CD4-positive, alpha-beta T cell (primary cell): ENCODE measurements at regions of chr15 and their contacts with region 1.

Region 1: GRCh38 chr15:59997070-59997701 is 6.9 kb upstream of the FOXB1 start:
- DNase-seq: peak in 12 of 14 experiments; percentile 25 to 77 (median 49)
- ATAC-seq: peak; percentile 65
- H3K4me3 ChIP-seq: no peak overlapping the region
- H3K4me3 Mint-ChIP-seq: no peak overlapping the region
- H3K27ac ChIP-seq: no peak overlapping the region
- H3K27ac Mint-ChIP-seq: no peak overlapping the region
- H3K4me1 ChIP-seq: peaks cover 52% of the 10 kb centered on the region
- H3K4me1 Mint-ChIP-seq: peaks cover 73% of the 10 kb centered on the region
- H3K27me3 ChIP-seq: peaks cover 95 to 100% of the 10 kb centered on the region in 2 experiments
- H3K27me3 Mint-ChIP-seq: peaks cover 98% of the 10 kb centered on the region
- CTCF ChIP-seq: no peak

Region 2: GRCh38 chr15:59917504-59918157 is 79.6 kb before region 1 on chr15:
- CTCF ChIA-PET with region 1: interaction called, 4 read pairs
- POLR2A ChIA-PET with region 1: no interaction called
- intact Hi-C with region 1: loop called in 1 of 2 experiments (anchors 5 kb)
- DNase-seq: peak; percentile 47 to 79 (median 60)
- ATAC-seq: peak; percentile 80
- H3K4me3 ChIP-seq: no peak overlapping the region
- H3K4me3 Mint-ChIP-seq: no peak overlapping the region
- H3K27ac ChIP-seq: no peak overlapping the region
- H3K27ac Mint-ChIP-seq: no peak overlapping the region
- H3K4me1 ChIP-seq: peaks cover 19% of the 10 kb centered on the region
- H3K4me1 Mint-ChIP-seq: peaks cover 15% of the 10 kb centered on the region
- H3K27me3 ChIP-seq: no peaks in the 10 kb centered on the region
- H3K27me3 Mint-ChIP-seq: peaks cover 30% of the 10 kb centered on the region
- CTCF ChIP-seq: peak; percentile 68

Region 3: DNA sequence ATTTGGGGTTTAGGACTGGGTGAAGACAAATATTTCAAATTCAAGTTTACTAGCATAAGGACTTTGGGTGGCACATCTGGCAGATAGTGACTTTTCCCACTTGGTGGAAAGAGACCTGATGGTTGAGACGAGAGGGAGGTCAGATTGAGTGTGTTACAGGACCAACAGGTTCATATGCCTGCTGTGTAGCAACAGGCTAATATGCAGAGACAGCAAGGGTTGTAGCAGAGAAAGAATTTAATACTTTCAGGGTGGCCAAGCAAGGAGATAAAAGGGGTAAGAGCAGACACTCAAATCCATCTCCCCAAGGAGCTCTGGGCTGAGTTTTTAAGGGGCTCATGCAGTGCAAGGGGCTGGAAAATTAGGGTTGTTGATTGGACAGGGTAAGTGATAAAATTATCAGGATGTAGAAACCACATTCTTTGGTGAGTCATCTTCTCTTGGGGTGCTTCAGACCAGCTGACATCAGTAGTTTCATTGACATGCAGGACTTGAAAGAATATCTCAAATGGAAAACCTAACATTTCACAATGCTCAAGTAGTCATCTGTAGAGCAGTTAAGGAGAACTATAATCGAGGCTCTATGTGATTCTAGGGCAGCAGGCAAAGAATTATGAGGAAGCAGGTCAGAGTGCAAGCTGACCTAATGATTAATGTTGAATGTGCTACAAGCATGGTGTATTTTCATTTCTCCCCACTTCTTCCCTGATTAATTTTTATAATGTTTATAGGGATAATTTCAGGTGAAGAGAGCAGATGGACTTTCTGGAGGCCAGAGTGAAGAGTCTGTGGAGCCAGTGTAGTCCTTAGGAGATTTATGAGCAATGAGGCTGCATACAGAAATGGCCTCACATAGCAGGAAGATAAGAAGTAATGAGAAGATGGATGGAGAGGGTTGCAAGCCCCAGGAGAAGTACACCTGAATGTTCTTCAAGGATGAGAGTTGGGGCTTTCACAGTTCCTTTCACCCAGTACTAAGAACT is 20.6 kb after region 1 on chr15:
- CTCF ChIA-PET with region 1: no interaction called
- POLR2A ChIA-PET with region 1: no interaction called
- intact Hi-C with region 1: no loop called
- DNase-seq: peak in 2 of 14 experiments; percentile 29 to 34
- ATAC-seq: no peak
- H3K4me3 ChIP-seq: no peak overlapping the region
- H3K4me3 Mint-ChIP-seq: no peak overlapping the region
- H3K27ac ChIP-seq: no peak overlapping the region
- H3K27ac Mint-ChIP-seq: no peak overlapping the region
- H3K4me1 ChIP-seq: peaks cover 10% of the 10 kb centered on the region
- H3K4me1 Mint-ChIP-seq: no peaks in the 10 kb centered on the region
- H3K27me3 ChIP-seq: peaks cover 5% of the 10 kb centered on the region in 2 experiments
- H3K27me3 Mint-ChIP-seq: peaks cover 55% of the 10 kb centered on the region
- CTCF ChIP-seq: no peak

Region 4: DNA sequence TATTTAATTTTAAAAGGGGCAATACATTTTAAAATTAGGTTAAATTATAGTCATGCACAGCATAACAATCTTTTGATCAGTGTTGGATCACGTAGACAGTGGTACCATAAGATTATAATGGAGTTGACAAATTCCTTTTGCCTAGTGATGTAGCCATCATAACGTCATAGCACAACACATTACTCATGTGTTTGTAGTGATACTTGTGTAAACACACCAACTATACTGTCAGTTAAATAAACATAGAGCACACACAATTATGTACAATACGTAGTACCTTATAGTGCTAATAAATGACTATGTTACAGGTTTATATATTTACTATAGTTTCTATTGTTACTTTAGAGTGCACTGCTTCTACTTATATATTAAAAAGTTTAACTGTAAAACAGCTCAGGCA is 38.2 kb after region 1 on chr15:
- CTCF ChIA-PET with region 1: no interaction called
- POLR2A ChIA-PET with region 1: interaction called, 3 read pairs
- intact Hi-C with region 1: loop called in 1 of 2 experiments (anchors 1 kb)
- DNase-seq: no peak
- ATAC-seq: no peak
- H3K4me3 ChIP-seq: no peak overlapping the region
- H3K4me3 Mint-ChIP-seq: no peak overlapping the region
- H3K27ac ChIP-seq: no peak overlapping the region
- H3K27ac Mint-ChIP-seq: no peak overlapping the region
- H3K4me1 ChIP-seq: no peaks in the 10 kb centered on the region
- H3K4me1 Mint-ChIP-seq: no peaks in the 10 kb centered on the region
- H3K27me3 ChIP-seq: peaks cover 0 to 2% of the 10 kb centered on the region in 2 experiments
- H3K27me3 Mint-ChIP-seq: peaks cover 7% of the 10 kb centered on the region
- CTCF ChIP-seq: no peak

Region 5: DNA sequence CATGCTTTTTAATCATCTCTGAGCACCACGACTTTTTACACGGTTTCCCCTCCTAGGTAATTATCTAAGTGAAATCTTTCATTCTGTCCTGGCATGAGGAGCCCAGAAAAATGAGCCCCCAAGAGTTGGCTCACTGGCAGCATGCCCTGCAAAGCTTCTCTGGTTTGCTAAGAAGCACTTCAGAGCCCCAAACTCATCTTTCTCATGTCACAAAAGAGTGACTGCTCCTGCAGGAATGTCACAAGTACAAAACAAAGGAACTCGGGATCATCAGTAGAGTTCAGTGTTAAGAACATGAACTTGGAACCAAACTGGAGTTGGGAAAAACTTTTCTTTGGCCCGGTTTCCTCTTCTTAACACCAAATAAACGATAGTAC is 130.8 kb after region 1 on chr15:
- CTCF ChIA-PET with region 1: interaction called, 5 read pairs
- POLR2A ChIA-PET with region 1: interaction called, 4 read pairs
- intact Hi-C with region 1: loop called in 1 of 2 experiments (anchors 5 kb)
- DNase-seq: peak in 1 of 14 experiments; percentile 6
- ATAC-seq: no peak
- H3K4me3 ChIP-seq: peak overlapping the region; percentile 55
- H3K4me3 Mint-ChIP-seq: peak overlapping the region; percentile 78
- H3K27ac ChIP-seq: peak overlapping the region; percentile 64 to 68
- H3K27ac Mint-ChIP-seq: peak overlapping the region; percentile 88
- H3K4me1 ChIP-seq: peaks cover 14% of the 10 kb centered on the region
- H3K4me1 Mint-ChIP-seq: peaks cover 52% of the 10 kb centered on the region
- H3K27me3 ChIP-seq: no peaks in the 10 kb centered on the region
- H3K27me3 Mint-ChIP-seq: no peaks in the 10 kb centered on the region
- CTCF ChIP-seq: no peak

Region 6: DNA sequence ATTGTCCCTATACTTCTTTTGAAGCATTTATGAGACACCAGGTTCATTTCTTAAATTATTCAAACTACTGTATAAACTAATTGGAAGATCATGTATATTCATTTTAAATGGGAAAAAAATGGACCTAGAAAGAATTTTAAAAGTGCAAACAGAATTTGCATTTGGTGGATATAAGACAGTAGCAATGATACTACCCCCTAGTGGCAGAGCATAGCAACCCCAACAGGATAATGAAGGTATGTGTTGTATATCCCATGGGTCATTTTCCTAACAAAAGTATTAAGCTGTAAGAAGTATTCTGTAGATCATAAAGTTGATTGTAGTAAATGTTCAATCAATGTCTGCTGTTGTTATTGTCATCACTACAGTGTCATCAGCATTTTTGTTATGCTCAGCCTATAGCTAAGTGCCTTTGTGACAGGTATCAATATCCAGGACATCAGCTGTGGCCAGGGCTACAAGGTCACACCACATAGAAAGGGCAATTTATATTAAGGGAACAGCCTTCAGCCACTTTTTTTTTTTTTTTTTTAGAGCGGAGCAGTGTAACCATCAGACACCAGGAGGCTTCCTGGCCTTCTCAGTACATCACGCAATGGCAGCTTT is 182.7 kb after region 1 on chr15:
- CTCF ChIA-PET with region 1: no interaction called
- POLR2A ChIA-PET with region 1: no interaction called
- intact Hi-C with region 1: loop called in 1 of 2 experiments (anchors 5 kb)
- DNase-seq: peak in 11 of 14 experiments; percentile 2 to 72 (median 14)
- ATAC-seq: peak; percentile 64
- H3K4me3 ChIP-seq: no peak overlapping the region
- H3K4me3 Mint-ChIP-seq: no peak overlapping the region
- H3K27ac ChIP-seq: no peak overlapping the region
- H3K27ac Mint-ChIP-seq: no peak overlapping the region
- H3K4me1 ChIP-seq: no peaks in the 10 kb centered on the region
- H3K4me1 Mint-ChIP-seq: no peaks in the 10 kb centered on the region
- H3K27me3 ChIP-seq: no peaks in the 10 kb centered on the region
- H3K27me3 Mint-ChIP-seq: peaks cover 23% of the 10 kb centered on the region
- CTCF ChIP-seq: peak; percentile 99

Region 7: DNA sequence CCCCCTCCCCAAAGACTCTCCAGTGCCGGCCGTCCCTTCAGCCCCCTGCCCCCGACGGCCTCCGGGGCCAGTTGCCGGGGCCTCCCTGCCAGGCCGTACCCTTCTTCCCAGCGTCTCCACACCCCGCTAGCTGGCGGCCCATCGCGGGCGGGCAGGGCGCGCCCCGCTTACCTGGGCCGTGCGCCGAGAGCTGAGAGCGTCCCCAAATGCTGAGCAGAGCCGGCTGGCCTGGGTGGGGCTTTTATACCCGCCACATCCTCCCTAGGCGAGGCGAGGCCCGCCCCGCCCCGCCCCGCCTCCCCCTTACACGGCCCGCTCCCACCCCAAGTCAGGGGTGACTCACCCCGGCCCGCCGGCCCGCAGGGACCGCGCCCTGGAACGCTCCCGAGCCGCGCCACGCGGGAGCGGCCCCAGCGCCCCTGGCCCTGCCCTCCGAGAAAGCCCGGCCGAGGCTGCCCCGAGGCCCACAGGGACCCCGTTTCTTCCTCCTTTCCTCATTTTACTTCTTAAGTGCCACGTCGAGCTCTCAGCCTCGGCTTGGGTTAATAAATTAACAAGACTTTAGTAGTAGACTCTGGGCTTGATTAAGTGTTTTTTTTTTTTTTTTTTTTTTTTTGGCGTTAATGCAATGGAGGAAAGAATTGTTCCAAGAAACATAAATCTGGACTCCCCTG is 400.7 kb after region 1 on chr15 and contains the start of gene ANXA2:
- CTCF ChIA-PET with region 1: no interaction called
- POLR2A ChIA-PET with region 1: interaction called, 3 read pairs
- intact Hi-C with region 1: loop called in 1 of 2 experiments (anchors 10 kb)
- DNase-seq: peak; percentile 66 to 93 (median 84)
- ATAC-seq: peak; percentile 77
- H3K4me3 ChIP-seq: peak within 1 kb of the TSS; percentile 72
- H3K4me3 Mint-ChIP-seq: peak within 1 kb of the TSS; percentile 92
- H3K27ac ChIP-seq: peak within 1 kb of the TSS; percentile 37 to 75
- H3K27ac Mint-ChIP-seq: peak within 1 kb of the TSS; percentile 97
- H3K4me1 ChIP-seq: peaks cover 58% of the 10 kb centered on the region
- H3K4me1 Mint-ChIP-seq: peaks cover 48% of the 10 kb centered on the region
- H3K27me3 ChIP-seq: no peaks in the 10 kb centered on the region
- H3K27me3 Mint-ChIP-seq: peaks cover 10% of the 10 kb centered on the region
- CTCF ChIP-seq: no peak
- total RNA-seq, gene ANXA2: 70.8 to 74.5 TPM

Region 8: DNA sequence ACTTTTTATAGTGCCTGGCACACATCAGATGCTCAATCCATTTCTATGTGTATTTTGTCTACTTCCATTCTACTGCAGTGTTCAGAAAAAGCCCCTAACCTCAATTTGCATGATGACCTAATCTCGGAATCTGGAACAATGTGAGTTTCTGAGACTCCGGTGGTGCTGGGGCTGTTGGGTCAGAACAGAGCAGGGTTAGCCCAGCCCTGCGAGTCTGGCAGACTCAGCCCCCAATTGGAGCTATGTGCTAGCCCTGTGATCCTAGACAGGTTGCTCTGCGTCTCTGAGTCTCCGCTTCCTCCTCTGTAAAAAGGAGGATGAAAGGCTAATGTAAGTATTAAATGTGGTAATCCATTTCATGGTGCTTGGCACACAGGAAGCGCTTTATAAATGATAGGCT is 576.8 kb after region 1 on chr15:
- CTCF ChIA-PET with region 1: no interaction called
- POLR2A ChIA-PET with region 1: no interaction called
- intact Hi-C with region 1: loop called in 1 of 2 experiments (anchors 10 kb)
- DNase-seq: peak in 8 of 14 experiments; percentile 25 to 88 (median 60)
- ATAC-seq: peak; percentile 83
- H3K4me3 ChIP-seq: peak overlapping the region; percentile 24
- H3K4me3 Mint-ChIP-seq: peak overlapping the region; percentile 80
- H3K27ac ChIP-seq: peak overlapping the region; percentile 58 to 59
- H3K27ac Mint-ChIP-seq: peak overlapping the region; percentile 84
- H3K4me1 ChIP-seq: peaks cover 83% of the 10 kb centered on the region
- H3K4me1 Mint-ChIP-seq: peaks cover 92% of the 10 kb centered on the region
- H3K27me3 ChIP-seq: no peaks in the 10 kb centered on the region
- H3K27me3 Mint-ChIP-seq: no peaks in the 10 kb centered on the region
- CTCF ChIP-seq: no peak